Right ventricle myocardium inferior (tissue), 1 donor: ENCODE measurements at regions of chr12 and their contacts with region 1.

Region 1: DNA sequence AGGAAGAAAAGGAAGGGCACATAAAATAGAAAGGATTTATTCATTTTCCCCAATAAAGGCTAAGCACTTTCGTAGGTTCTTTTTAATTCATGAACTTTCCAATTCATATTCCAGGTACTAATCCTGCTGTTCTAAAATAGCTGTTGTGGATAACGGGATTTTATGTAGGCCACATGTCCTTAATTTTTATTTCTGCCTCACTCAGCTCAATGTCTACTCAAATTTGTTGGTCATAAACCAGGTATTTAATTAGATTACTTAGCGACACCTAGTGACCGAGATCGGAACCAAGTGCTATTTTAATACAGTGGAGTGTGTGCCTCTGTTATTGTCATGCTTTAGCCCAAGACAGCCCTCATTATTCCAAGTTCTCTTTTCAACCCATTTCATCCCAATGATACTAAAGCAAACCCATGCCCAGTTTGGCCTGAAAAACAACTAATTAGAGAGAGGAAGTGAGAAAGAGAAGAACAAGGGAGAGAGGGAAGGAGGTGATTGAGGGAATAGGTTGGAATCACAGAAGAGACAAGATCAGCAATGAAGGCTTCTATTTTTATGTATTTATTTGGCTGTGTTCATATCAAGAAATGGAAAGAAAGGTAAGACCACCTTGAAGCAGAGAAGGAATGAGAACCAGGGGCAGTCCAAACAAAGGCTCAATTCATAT is 45.9 kb upstream of the IFNG-AS1 start:
- DNase-seq: no peak
- ATAC-seq: peak; percentile 75

Region 2: DNA sequence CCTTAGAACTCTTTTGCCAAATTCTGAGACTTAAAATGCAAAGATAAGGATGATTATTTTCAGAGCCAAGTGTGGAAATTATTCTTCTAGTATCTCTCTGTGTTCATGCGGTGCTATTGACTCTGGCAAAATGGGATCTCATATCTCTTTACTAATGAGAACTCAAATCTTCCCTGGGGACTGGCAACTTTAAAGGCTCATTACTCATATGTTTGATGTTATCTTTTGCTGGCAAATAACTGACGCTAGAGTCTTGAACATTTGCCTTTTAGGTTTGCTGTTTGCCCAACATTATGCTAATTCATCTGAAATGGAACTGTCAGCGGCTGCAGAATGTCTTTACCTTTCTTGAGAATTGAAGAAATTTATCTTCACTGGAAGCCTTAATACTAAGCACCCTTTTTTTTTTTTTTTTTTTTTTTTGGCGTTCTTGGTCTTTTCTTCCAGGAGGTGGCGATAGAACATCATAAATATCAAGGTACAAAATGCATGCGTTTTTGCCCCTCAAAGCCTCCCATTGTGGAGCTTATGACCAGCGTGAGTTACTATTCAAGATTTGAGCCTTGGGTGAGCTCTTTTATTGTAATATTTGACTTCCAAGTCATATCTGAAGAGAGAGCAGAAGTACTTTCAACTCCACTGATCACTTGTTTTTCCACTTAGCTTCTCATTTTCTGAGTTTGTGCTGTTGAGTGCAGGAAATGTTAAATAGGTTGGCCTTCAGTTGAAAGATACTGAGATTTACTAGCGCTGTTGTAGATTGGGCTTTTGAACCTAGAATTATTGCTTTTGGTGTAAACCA is 587.6 kb before region 1 on chr12:
- intact Hi-C with region 1: loop called (anchors 2 kb)
- DNase-seq: no peak
- ATAC-seq: peak; percentile 56

Region 3: GRCh38 chr12:67433385-67434175 is 509.8 kb before region 1 on chr12:
- intact Hi-C with region 1: loop called (anchors 5 kb)
- DNase-seq: no peak
- ATAC-seq: no peak

Region 4: GRCh38 chr12:67519484-67520433 is 423.6 kb before region 1 on chr12:
- intact Hi-C with region 1: loop called (anchors 10 kb)
- DNase-seq: no peak
- ATAC-seq: no peak

Region 5: GRCh38 chr12:67788118-67788517 is 155.2 kb before region 1 on chr12:
- intact Hi-C with region 1: loop called (anchors 5 kb)
- DNase-seq: no peak
- ATAC-seq: peak; percentile 31

Region 6: GRCh38 chr12:68012712-68013111 is 69.4 kb after region 1 on chr12:
- intact Hi-C with region 1: no loop called
- DNase-seq: no peak
- ATAC-seq: no peak